ENCODE measurements at regions of chr5 and their contacts with region 1.

Region 1: GRCh38 chr5:115838885-115839518 is 2.4 kb downstream of the ATG12 start:
- DNase-seq: peak; percentile 65 to 82 (median 75)
- H3K4me3 ChIP-seq: peak overlapping the region in 1 of 7 experiments; percentile 32
- H3K27ac ChIP-seq: peak overlapping the region in 1 of 2 experiments; percentile 43
- H3K4me1 ChIP-seq: peaks cover 15 to 39% (median 33%) of the 10 kb centered on the region in 4 experiments
- H3K27me3 ChIP-seq: no peaks in the 10 kb centered on the region

Region 2: DNA sequence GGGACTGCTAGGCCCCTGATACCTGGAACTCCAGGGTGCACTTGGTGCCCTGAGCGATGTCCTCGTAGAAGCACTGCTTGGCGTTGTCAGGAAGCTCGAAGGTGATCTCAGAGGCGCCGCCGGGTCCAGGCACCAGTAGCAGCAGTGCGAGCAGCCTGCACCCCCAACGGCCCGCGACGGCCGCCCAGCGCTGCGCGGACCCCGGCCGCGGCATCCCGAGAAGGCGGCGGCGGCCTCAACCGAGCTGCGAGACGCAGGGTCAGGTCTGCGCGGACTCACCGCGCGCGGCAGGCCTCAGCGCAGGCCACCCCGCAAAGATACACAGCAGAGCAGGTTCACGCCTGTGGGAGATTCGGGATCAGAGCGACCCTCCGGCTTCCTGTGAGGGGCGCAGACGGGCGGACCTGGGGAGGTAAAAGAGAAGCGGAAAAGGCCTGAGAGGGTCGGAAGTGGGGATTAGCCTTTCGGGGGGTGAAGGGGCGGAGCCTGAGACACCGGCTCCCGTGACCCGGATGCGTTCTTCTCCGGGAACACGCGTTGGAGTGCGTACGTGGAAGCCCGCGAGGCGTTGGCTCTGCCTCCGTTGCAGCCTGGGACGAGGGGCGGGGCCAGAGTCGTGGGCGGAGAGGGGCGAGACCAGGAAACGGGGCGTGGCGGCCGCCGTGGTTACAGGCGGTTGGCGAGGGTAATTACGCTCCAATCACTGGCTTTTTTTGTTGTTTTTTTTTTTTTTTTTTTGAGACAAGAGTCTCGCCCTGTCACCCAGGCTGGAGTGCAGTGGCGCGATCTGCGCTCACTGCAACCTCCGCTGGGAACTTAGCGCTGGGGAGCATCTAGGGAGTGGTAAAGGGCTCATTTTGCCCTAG is 213.2 kb before region 1 on chr5 and contains the start of gene TMED7:
- CTCF ChIA-PET with region 1: interaction called, 10 read pairs
- POLR2A ChIA-PET with region 1: interaction called, 3 read pairs
- DNase-seq: peak; percentile 98 to 99 (median 99)
- H3K4me3 ChIP-seq: peak within 1 kb of the TSS; percentile 77 to 95 (median 93)
- H3K27ac ChIP-seq: peak within 1 kb of the TSS; percentile 69 to 92
- H3K4me1 ChIP-seq: peaks cover 12 to 27% (median 22%) of the 10 kb centered on the region in 4 experiments
- H3K27me3 ChIP-seq: no peaks in the 10 kb centered on the region

Region 3: DNA sequence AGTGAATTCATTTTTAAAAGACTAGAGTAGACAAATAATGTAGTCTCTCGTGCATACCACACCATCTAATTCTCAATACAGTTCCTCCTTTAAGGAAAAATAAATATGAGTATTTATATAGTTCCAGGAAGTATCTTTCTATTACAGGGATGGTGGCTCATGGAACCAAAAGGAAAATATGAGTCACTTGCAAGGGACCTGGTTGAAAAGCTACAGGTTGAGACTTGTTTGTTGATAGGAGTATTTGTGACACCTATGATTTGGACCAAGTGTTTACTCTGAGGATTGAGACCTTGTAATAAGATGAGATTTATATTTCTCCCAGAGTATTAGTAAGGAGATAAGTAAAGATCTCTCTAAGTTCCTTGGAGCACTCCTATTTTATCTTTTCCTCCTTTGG is 90.0 kb before region 1 on chr5:
- CTCF ChIA-PET with region 1: no interaction called
- POLR2A ChIA-PET with region 1: no interaction called
- DNase-seq: no peak
- H3K4me3 ChIP-seq: no peak overlapping the region
- H3K27ac ChIP-seq: no peak overlapping the region
- H3K4me1 ChIP-seq: no peaks in the 10 kb centered on the region
- H3K27me3 ChIP-seq: peaks cover 0 to 5% (median 0%) of the 10 kb centered on the region in 5 experiments

Measured in common myeloid progenitor, CD34-positive (primary cell).